Transverse colon (tissue), 4 donors: ENCODE measurements at regions of chrX and their contacts with region 1.

Region 1: GRCh38 chrX:122055979-122056715 is 1008.7 kb downstream of the GLUD2 start:
- DNase-seq: no peak
- H3K4me3 ChIP-seq: no peak overlapping the region
- H3K27ac ChIP-seq: no peak overlapping the region
- H3K4me1 ChIP-seq: no peaks in the 10 kb centered on the region
- H3K27me3 ChIP-seq: no peaks in the 10 kb centered on the region
- CTCF ChIP-seq: no peak
- EP300 ChIP-seq: no peak
- POLR2A ChIP-seq: no peak

Region 2: DNA sequence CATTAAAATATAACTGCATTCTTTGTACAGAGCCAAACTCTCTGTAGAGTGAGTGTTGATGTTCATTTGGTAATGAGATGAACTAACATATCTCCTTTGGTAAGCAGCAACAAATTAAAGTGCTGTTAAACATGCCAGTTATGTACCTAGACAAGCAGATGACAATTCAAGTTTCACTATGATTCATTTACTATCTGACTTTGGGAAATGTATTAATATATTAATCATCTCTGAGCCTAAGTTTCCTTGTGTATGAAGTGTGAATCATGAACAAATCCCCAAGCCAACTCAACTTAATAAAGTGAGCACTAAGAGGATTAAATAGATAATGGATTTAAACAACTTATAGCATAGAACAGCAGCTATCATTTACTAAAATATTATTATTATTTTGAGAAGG is 35.4 kb after region 1 on chrX:
- in situ Hi-C with region 1: no loop called
- intact Hi-C with region 1: loop called (anchors 2 kb)
- DNase-seq: no peak
- H3K4me3 ChIP-seq: no peak overlapping the region
- H3K27ac ChIP-seq: no peak overlapping the region
- H3K4me1 ChIP-seq: no peaks in the 10 kb centered on the region
- H3K27me3 ChIP-seq: no peaks in the 10 kb centered on the region
- CTCF ChIP-seq: no peak
- EP300 ChIP-seq: no peak
- POLR2A ChIP-seq: no peak

Region 3: DNA sequence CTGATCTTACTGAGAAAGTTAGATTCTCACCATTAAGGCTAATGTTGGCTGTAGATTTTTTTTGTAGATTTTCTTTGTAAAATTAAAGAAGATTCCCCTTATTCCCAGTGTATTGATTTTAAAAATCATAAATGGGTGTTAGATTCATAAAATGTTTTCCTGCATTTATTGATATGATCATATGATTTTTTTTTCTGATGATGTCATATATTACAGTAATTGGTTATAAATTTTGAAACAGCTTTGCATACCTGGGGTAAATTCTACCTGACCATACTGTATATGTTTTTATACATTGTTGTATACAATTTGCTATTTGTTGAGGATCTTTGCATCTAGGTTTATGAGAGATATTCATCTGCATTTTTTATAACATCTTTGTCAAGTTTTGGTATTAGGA is 247.6 kb after region 1 on chrX:
- in situ Hi-C with region 1: no loop called
- intact Hi-C with region 1: no loop called
- DNase-seq: no peak
- H3K4me3 ChIP-seq: no peak overlapping the region
- H3K27ac ChIP-seq: no peak overlapping the region
- H3K4me1 ChIP-seq: no peaks in the 10 kb centered on the region
- H3K27me3 ChIP-seq: no peaks in the 10 kb centered on the region
- CTCF ChIP-seq: no peak
- EP300 ChIP-seq: no peak
- POLR2A ChIP-seq: no peak